Activated CD8-positive, alpha-beta memory T cell treated with anti-CD3 and anti-CD28 coated beads, Interleukin-2, amount 10 ng/mL, durations not matched to agents 7 days and 5 days (primary cell): ENCODE measurements at regions of chr2 and their contacts with region 1.

Region 1: GRCh38 chr2:230712443-230713330 is at the start of gene CAB39:
- DNase-seq: peak; percentile 89
- ATAC-seq: peak; percentile 88
- H3K4me3 Mint-ChIP-seq: peak within 1 kb of the TSS; percentile 97
- H3K27ac Mint-ChIP-seq: peak within 1 kb of the TSS; percentile 96
- H3K4me1 Mint-ChIP-seq: peaks cover 42% of the 10 kb centered on the region
- H3K27me3 Mint-ChIP-seq: no peaks in the 10 kb centered on the region
- total RNA-seq, gene CAB39: 148 to 174 TPM

Region 2: DNA sequence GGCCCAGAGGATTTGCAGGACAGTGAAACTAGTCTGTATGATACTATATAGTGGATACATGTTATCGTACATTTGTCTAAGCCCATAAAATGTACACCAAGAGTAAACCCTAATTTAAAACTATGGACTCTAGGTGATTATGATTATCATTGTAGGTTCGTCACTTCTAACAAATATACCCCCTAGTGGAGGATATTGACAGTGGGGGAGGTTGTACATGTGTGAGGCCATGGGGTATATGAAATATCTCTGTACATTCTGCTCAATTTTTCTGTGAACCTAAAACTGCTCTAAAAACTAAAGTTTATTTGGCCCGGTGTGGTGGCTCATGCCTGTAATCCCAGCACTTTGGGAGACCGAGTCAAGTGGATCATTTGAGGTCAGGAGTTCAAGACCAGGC is 81.2 kb before region 1 on chr2:
- CTCF ChIA-PET with region 1: no interaction called
- DNase-seq: no peak
- ATAC-seq: no peak
- H3K4me3 Mint-ChIP-seq: no peak overlapping the region
- H3K27ac Mint-ChIP-seq: no peak overlapping the region
- H3K4me1 Mint-ChIP-seq: peaks cover 9% of the 10 kb centered on the region
- H3K27me3 Mint-ChIP-seq: no peaks in the 10 kb centered on the region

Region 3: DNA sequence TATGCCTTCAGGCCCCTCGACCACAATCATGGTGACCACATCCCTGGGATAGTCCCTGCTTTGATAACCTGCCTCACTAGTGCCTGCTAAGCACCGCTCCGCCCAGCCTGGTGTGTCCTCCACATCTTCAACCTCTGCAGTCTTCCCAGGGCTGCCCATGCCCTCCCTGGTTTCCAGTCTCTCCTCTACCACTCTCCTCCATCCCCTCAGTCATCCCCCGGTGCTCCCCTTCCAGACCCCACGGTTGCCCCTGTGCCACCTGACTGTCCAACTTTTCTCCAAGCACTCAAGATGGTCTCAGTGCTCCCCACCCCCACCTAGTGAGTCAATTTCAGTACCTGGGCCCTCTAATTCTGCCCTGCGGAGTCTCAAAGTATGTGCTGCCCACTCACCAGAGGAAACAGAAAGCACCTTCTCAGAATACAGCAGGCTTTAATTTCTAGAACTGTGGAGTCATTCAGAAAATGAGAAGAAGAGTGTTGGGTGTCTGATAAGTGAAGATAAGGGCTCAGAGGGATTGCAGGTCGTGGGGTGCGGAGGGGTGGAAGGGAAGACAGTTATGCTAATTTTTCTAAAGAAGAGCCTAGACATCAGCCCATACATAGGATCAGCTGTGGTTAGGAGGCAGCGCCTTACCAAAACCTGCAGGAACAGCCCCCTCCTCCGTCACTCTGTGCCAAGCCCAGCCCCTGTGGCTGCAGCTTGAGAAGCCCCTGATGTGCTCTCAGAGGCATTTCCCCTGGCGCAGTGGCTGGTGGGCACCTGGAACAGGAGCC is 53.6 kb before region 1 on chr2:
- CTCF ChIA-PET with region 1: interaction called, 15 read pairs
- DNase-seq: peak; percentile 94
- ATAC-seq: peak; percentile 63
- H3K4me3 Mint-ChIP-seq: peak overlapping the region; percentile 85
- H3K27ac Mint-ChIP-seq: peak overlapping the region; percentile 99
- H3K4me1 Mint-ChIP-seq: peaks cover 97% of the 10 kb centered on the region
- H3K27me3 Mint-ChIP-seq: no peaks in the 10 kb centered on the region

Region 4: GRCh38 chr2:230668184-230668938 is 44.3 kb before region 1 on chr2:
- CTCF ChIA-PET with region 1: interaction called, 11 read pairs
- DNase-seq: peak; percentile 58
- ATAC-seq: peak; percentile 17
- H3K4me3 Mint-ChIP-seq: no peak overlapping the region
- H3K27ac Mint-ChIP-seq: peak overlapping the region; percentile 86
- H3K4me1 Mint-ChIP-seq: peaks cover 75% of the 10 kb centered on the region
- H3K27me3 Mint-ChIP-seq: no peaks in the 10 kb centered on the region

Region 5: DNA sequence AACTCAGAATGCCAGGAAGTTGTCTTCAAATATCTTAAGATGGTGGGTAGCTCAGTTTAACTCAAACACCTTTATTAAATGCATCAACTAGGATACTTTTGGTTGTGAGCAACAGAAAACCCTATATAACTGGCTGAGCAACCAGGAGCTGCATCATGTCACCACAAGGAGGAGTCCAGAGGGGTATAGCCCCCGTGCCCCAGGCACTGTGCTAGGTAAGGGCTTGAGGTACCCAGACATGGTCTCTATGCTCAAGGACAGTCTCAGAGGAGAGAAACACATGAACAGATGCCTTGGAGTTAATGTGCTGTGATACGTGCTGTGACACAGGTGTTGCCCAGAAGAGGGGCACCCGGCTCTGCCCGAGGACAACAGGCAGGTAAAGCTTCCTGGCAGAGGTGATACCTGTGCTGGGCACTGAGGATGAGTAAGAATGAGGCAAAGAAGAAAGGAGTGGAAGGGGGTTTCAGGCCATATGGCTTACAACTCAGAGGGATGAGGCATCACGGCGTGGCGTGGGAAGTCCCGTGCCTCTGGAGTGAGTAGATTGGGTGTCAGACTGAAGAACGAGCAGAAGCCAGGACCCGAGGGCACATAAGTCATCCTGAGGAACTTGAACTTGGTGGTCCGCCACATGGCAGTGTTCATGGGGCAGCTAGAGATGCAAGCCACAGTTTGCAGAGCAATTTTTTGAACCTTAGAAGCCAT is 32.1 kb before region 1 on chr2:
- CTCF ChIA-PET with region 1: interaction called, 10 read pairs
- DNase-seq: no peak
- ATAC-seq: no peak
- H3K4me3 Mint-ChIP-seq: no peak overlapping the region
- H3K27ac Mint-ChIP-seq: no peak overlapping the region
- H3K4me1 Mint-ChIP-seq: peaks cover 52% of the 10 kb centered on the region
- H3K27me3 Mint-ChIP-seq: no peaks in the 10 kb centered on the region

Region 6: GRCh38 chr2:230798769-230799399 is 86.2 kb after region 1 on chr2:
- CTCF ChIA-PET with region 1: interaction called, 47 read pairs
- DNase-seq: peak; percentile 65
- ATAC-seq: no peak
- H3K4me3 Mint-ChIP-seq: no peak overlapping the region
- H3K27ac Mint-ChIP-seq: no peak overlapping the region
- H3K4me1 Mint-ChIP-seq: peaks cover 35% of the 10 kb centered on the region
- H3K27me3 Mint-ChIP-seq: no peaks in the 10 kb centered on the region

Region 7: GRCh38 chr2:230942920-230943896 is 230.5 kb after region 1 on chr2:
- CTCF ChIA-PET with region 1: no interaction called
- DNase-seq: peak; percentile 88
- ATAC-seq: peak; percentile 77
- H3K4me3 Mint-ChIP-seq: peak overlapping the region; percentile 79
- H3K27ac Mint-ChIP-seq: peak overlapping the region; percentile 89
- H3K4me1 Mint-ChIP-seq: peaks cover 55% of the 10 kb centered on the region
- H3K27me3 Mint-ChIP-seq: peaks cover 22% of the 10 kb centered on the region